MCF 10A (cell line): ENCODE measurements at regions of chr11 and their contacts with region 1.

Region 1: GRCh38 chr11:32852207-32852606 is 22.5 kb downstream of the PRRG4 start:
- DNase-seq: peak; percentile 75
- H3K4me3 Mint-ChIP-seq: peak overlapping the region; percentile 57
- H3K27ac Mint-ChIP-seq: peak overlapping the region; percentile 82
- H3K4me1 Mint-ChIP-seq: peaks cover 13% of the 10 kb centered on the region
- H3K27me3 Mint-ChIP-seq: no peaks in the 10 kb centered on the region
- CTCF ChIP-seq: no peak

Region 2: GRCh38 chr11:31834237-31834636 is 1018.0 kb before region 1 on chr11:
- CTCF ChIA-PET with region 1: no interaction called
- POLR2A ChIA-PET with region 1: no interaction called
- intact Hi-C with region 1: no loop called
- DNase-seq: no peak
- H3K4me3 Mint-ChIP-seq: no peak overlapping the region
- H3K27ac Mint-ChIP-seq: no peak overlapping the region
- H3K4me1 Mint-ChIP-seq: no peaks in the 10 kb centered on the region
- H3K27me3 Mint-ChIP-seq: peaks cover 1% of the 10 kb centered on the region
- CTCF ChIP-seq: no peak

Region 3: DNA sequence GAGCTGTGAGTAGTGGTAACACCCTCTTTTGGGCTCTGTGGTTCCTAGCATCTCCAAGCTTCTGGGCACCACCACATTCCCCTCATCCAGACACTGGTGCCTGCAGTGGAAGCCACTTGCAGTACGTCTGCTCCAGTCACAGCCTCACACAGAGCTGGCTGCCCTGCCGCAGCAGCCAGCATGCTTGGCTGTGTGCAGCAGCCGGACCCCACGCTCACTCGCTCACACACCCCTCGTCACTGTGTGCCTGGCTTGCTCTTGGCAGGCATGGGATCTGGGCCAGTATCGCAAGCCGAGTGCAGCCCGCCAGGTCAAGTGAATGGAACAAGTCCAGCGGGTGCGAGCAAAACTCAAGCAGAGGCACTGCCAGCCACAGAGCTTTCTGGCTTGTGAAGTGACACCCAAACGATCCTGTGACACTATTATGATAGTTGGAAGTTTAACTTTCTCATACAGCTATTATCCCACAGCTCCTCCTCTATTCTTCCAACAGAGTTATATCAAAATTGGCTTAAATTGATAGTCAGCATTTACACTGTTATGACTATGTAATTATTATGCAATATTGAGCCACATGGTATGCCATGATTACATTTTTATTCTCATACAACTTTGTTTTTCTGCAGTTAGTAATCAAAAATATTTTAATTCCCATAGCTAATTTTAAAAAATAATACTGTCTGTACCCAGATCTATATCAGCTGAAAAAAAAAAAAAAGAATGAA is 146.7 kb before region 1 on chr11:
- CTCF ChIA-PET with region 1: no interaction called
- POLR2A ChIA-PET with region 1: no interaction called
- intact Hi-C with region 1: no loop called
- DNase-seq: no peak
- H3K4me3 Mint-ChIP-seq: no peak overlapping the region
- H3K27ac Mint-ChIP-seq: no peak overlapping the region
- H3K4me1 Mint-ChIP-seq: peaks cover 13% of the 10 kb centered on the region
- H3K27me3 Mint-ChIP-seq: no peaks in the 10 kb centered on the region
- CTCF ChIP-seq: no peak

Region 4: GRCh38 chr11:32829680-32830412 is 22.4 kb before region 1 on chr11 and contains the start of gene PRRG4:
- CTCF ChIA-PET with region 1: interaction called, 4 read pairs
- POLR2A ChIA-PET with region 1: interaction called, 12 read pairs
- intact Hi-C with region 1: no loop called
- DNase-seq: peak; percentile 77
- H3K4me3 Mint-ChIP-seq: peak within 1 kb of the TSS; percentile 81
- H3K27ac Mint-ChIP-seq: peak within 1 kb of the TSS; percentile 81
- H3K4me1 Mint-ChIP-seq: no peaks in the 10 kb centered on the region
- H3K27me3 Mint-ChIP-seq: no peaks in the 10 kb centered on the region
- CTCF ChIP-seq: no peak
- total RNA-seq, gene PRRG4: 1.1 and 1.2 TPM in 2 replicates